Motor neuron (in vitro differentiated cells): ENCODE measurements at regions of chr6 and their contacts with region 1.

Region 1: DNA sequence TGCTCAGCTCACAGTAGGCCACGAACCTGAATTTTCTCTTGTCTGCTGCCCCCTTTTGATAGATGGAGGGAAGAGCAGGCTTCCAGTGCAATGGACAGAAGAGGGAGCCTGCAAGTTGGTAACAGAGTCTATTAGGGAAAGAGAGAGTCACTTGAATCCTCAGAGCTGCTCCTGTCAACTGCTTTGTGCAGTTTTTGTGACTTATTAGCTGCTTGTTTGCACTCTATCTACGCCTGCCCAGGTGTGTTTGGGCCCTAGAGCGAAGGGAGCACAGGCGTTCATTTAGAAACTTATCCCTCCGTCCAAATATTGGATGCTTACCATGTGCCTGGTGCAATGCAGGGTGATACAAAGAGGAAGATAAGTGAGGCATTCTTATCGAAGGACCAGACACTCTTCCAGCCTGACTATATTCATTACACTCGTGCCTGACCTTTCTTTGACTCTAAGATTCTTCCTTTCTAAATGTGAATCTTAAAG is 11.6 kb upstream of the SLC2A12 start:
- ATAC-seq: peak; percentile 93 to 99 (median 96)
- H3K4me3 ChIP-seq: no peak overlapping the region
- H3K27ac ChIP-seq: no peak overlapping the region
- H3K4me1 ChIP-seq: peaks cover 0 to 10% of the 10 kb centered on the region in 2 donors

Region 2: DNA sequence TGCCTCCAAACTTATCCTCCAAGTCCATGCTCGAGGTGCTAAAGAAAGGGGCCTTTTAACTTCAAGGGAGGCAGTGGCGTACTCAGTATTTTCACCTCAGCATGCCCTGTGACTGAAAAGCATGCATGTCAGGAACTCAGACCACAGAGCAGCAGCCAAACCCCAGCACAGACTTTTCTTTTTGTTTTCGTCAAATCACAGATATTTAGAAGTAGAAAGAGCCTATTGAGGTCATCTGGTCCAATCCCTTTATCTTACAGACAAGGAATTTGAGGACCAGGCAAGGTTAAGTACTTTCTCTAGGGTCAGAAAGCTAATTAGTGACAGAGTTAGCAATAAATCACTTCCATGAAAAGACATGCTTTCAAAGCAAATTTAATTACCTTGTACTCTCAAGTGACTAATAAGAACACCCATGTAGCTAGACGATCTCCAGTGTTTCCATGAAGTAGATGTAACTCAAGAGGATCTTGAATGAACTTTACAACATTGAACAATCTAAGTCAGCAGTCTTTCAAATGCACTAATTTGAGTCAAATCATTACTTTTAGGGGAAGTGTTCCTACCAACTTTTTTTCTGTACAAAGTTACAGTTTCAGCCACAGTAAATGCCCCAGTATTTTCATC is 1698.6 kb before region 1 on chr6:
- in situ Hi-C with region 1: no loop called
- ATAC-seq: peak in 5 of 8 experiments; percentile 54 to 84 (median 76)
- H3K4me3 ChIP-seq: no peak overlapping the region
- H3K27ac ChIP-seq: no peak overlapping the region
- H3K4me1 ChIP-seq: peaks cover 7 to 20% of the 10 kb centered on the region in 2 donors

Region 3: GRCh38 chr6:133973109-133973971 is 90.7 kb before region 1 on chr6:
- in situ Hi-C with region 1: loop called in 1 of 9 experiments (anchors 10 kb)
- ATAC-seq: peak in 5 of 8 experiments; percentile 28 to 42 (median 36)
- H3K4me3 ChIP-seq: no peak overlapping the region
- H3K27ac ChIP-seq: no peak overlapping the region
- H3K4me1 ChIP-seq: no peaks in the 10 kb centered on the region

Region 4: DNA sequence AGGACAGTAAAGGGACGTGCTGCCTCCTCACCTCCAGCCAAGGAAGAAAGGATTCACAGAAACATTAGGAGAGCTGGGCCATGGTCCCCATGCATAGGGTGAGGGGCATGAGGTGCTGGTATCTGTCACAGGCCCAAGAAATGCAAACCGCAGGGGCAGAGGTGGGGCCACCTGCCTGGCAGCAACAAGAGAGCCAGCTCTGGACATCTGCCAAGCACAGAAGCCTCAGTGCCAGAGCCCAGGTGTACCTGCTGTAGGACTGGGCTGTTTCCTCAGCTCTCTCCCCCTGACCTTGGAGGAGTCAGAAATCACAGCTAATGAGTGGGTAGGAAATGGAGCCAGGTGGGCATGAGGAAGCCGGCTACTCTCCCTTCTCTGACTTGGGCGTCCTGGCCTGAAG is 56.9 kb before region 1 on chr6:
- in situ Hi-C with region 1: no loop called
- ATAC-seq: no peak
- H3K4me3 ChIP-seq: no peak overlapping the region
- H3K27ac ChIP-seq: no peak overlapping the region
- H3K4me1 ChIP-seq: peaks cover 0 to 11% of the 10 kb centered on the region in 2 donors